CD8-positive, alpha-beta T cell (primary cell): ENCODE measurements at regions of chr2 and their contacts with region 1.

Region 1: DNA sequence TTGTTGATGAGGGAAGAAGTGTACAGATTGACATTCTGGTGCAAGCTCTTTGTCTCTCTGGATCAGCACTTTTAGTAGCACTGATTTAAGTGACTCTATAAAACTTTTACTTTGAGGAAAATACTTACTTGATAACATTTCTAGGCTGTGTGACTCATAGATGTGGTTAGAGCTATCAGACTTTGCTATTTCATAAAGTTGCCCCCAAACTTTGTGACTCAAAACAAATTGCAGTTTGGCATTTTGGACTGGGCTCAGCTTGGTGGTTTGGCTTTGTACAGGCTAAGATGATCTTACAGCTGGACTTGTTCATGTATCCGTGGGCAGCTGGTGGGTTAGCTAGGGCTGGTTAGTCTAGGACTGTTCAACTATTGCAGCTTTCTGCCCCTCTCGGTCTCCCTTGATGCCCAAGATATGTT is 42.1 kb upstream of the GLS start:
- DNase-seq: no peak
- ATAC-seq: no peak
- H3K4me3 ChIP-seq: no peak overlapping the region
- H3K4me3 Mint-ChIP-seq: no peak overlapping the region
- H3K27ac ChIP-seq: no peak overlapping the region
- H3K27ac Mint-ChIP-seq: no peak overlapping the region
- H3K4me1 ChIP-seq: no peaks in the 10 kb centered on the region
- H3K4me1 Mint-ChIP-seq: no peaks in the 10 kb centered on the region
- H3K27me3 ChIP-seq: no peaks in the 10 kb centered on the region
- H3K27me3 Mint-ChIP-seq: no peaks in the 10 kb centered on the region
- CTCF ChIP-seq: no peak

Region 2: GRCh38 chr2:190812506-190813294 is 25.8 kb before region 1 on chr2:
- CTCF ChIA-PET with region 1: no interaction called
- POLR2A ChIA-PET with region 1: no interaction called
- intact Hi-C with region 1: no loop called
- DNase-seq: no peak
- ATAC-seq: no peak
- H3K4me3 ChIP-seq: no peak overlapping the region
- H3K4me3 Mint-ChIP-seq: no peak overlapping the region
- H3K27ac ChIP-seq: no peak overlapping the region
- H3K27ac Mint-ChIP-seq: no peak overlapping the region
- H3K4me1 ChIP-seq: no peaks in the 10 kb centered on the region
- H3K4me1 Mint-ChIP-seq: no peaks in the 10 kb centered on the region
- H3K27me3 ChIP-seq: no peaks in the 10 kb centered on the region
- H3K27me3 Mint-ChIP-seq: peaks cover 2% of the 10 kb centered on the region
- CTCF ChIP-seq: no peak

Region 3: GRCh38 chr2:190849774-190850173 is 11.3 kb after region 1 on chr2:
- CTCF ChIA-PET with region 1: interaction called, 30 read pairs
- POLR2A ChIA-PET with region 1: no interaction called
- intact Hi-C with region 1: no loop called
- DNase-seq: no peak
- ATAC-seq: no peak
- H3K4me3 ChIP-seq: no peak overlapping the region
- H3K4me3 Mint-ChIP-seq: no peak overlapping the region
- H3K27ac ChIP-seq: no peak overlapping the region
- H3K27ac Mint-ChIP-seq: no peak overlapping the region
- H3K4me1 ChIP-seq: no peaks in the 10 kb centered on the region
- H3K4me1 Mint-ChIP-seq: peaks cover 2% of the 10 kb centered on the region
- H3K27me3 ChIP-seq: no peaks in the 10 kb centered on the region
- H3K27me3 Mint-ChIP-seq: no peaks in the 10 kb centered on the region
- CTCF ChIP-seq: no peak